GM12878 (cell line): ENCODE measurements at regions of chr17 and their contacts with region 1.

Region 1: DNA sequence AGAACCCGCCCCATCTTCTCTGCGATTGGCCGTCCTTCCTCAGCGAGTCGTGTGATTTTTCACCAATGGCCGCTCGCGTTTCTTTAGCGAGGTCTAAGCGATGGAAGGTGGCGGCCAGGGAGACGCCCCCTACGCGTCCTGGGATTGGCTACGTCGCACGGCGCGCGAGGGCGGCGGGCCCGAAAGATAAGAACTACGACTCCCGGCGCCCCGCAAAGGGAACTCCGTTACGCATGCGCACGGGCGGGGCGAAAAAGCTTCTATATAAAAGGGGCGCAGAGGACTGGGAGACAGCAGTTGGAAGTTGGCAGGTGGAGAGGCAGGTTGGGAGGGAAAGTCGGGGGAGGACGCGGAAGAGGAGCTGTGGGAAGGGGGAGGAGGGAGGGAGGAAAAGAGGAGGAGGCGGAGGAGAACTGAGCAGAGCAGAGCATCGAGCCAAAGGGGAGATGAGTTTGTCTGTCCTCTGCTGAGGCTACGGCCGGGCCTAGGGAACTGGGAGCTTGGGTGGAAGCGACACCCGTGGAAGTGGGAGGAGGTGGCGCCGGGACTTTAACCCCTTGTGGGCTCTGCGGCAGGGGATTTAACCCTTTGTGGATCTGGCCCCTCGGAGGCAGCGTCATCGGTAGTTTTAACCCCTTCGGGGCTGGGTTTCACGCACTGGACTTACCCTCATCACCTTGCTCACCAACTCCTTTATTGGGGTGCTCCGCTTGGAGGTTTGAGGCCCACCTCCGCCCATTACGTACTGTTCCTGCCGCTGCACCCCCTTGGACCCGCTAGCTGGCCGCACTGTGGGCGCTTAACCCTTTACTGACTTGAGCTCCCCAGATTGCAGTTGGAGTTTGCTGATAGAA is at the start of gene HEXIM1:
- DNase-seq: peak; percentile 95
- ATAC-seq: peak; percentile 83
- H3K4me3 ChIP-seq: peak within 1 kb of the TSS; percentile 96
- H3K27ac ChIP-seq: peak within 1 kb of the TSS; percentile 100
- H3K4me1 ChIP-seq: peaks cover 23% of the 10 kb centered on the region
- H3K27me3 ChIP-seq: no peaks in the 10 kb centered on the region
- CTCF ChIP-seq: no peak
- EP300 ChIP-seq: peak; percentile 13 to 14; a peak in 1 of 4 replicates
- POLR2A ChIP-seq: peak; percentile 100
- RAD21 ChIP-seq: no peak
- polyA plus RNA-seq, gene HEXIM1: 1.9 to 2.1 TPM

Region 2: DNA sequence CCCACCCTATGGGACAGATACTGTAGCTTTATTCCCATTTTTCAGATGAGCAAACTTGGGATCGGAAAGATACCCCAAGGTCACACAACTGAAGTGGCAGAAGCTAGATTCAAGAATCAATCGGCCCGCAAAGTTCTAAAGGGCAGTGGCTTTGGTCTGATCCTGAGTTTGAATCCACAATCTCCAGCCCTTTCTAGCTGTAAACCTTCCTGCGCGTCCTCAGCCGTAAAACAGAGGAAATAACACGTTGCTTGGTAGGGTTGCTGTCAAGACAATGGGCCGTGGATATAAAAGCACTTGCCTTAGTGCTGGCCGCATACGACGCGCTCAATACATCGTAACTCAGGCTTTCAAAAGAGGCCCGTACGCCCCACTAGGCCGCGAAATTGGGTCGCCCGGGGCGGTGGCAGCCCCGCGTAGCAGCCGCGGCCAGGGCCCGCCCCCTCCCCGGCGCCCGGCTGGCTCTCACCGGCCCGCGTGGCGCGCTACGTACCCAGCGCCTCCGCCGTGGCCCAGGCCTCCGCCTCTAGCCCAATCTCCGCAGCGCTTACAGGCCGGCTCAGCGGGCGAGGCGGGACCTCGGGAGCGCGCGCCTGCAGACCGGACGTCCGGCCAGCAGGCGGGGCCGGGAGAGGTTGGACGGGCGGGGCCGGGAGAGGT is 97.2 kb before region 1 on chr17 and contains the start of gene DCAKD:
- CTCF ChIA-PET with region 1: interaction called, 5 read pairs
- POLR2A ChIA-PET with region 1: interaction called, 20 read pairs
- RAD21 ChIA-PET with region 1: interaction called, 4 read pairs
- SMC1A ChIA-PET with region 1: interaction called, 3 read pairs
- in situ Hi-C with region 1: no loop called
- intact Hi-C with region 1: no loop called
- DNase-seq: no peak
- ATAC-seq: peak; percentile 97
- H3K4me3 ChIP-seq: peak within 1 kb of the TSS; percentile 76
- H3K27ac ChIP-seq: peak within 1 kb of the TSS; percentile 95
- H3K4me1 ChIP-seq: peaks cover 13% of the 10 kb centered on the region
- H3K27me3 ChIP-seq: no peaks in the 10 kb centered on the region
- CTCF ChIP-seq: no peak
- EP300 ChIP-seq: no peak
- POLR2A ChIP-seq: peak; percentile 77; the same call in 1 of the 2 replicates
- RAD21 ChIP-seq: no peak
- polyA plus RNA-seq, gene DCAKD: 11.6 to 11.7 TPM

Region 3: DNA sequence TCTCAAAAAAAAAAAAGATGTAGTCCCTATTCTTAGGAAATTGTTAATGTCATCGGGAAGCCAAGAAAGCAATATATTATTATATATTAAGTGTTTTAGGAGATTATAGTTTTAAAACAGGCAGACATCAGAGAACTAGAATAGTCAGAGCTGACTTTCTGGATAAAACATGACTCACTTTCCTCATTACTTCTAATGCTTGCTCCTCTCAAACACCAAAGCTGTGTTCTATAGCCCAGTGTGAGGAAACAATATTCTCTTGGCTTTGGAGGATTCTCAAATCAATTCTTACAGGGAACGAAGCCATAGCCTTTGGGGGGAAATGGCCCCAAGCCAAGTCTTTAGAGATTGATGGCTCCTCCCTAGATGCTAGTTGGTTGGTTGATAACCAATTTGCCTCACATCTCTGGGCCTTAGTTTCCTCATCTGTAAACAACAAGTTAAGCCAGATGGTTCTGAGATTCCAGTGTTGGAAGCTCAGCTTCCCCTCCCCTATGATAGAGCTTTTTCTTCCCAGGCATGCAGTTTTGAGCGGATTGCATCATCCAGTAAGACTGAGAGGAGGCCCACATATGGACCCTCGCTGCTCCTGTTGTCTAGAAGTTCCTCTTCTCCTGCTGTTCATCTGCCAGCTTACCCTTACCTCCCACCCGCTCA is 74.9 kb before region 1 on chr17:
- CTCF ChIA-PET with region 1: no interaction called
- POLR2A ChIA-PET with region 1: no interaction called
- RAD21 ChIA-PET with region 1: no interaction called
- SMC1A ChIA-PET with region 1: no interaction called
- in situ Hi-C with region 1: no loop called
- intact Hi-C with region 1: no loop called
- DNase-seq: no peak
- ATAC-seq: no peak
- H3K4me3 ChIP-seq: no peak overlapping the region
- H3K27ac ChIP-seq: no peak overlapping the region
- H3K4me1 ChIP-seq: peaks cover 19% of the 10 kb centered on the region
- H3K27me3 ChIP-seq: no peaks in the 10 kb centered on the region
- CTCF ChIP-seq: no peak
- EP300 ChIP-seq: no peak
- POLR2A ChIP-seq: no peak
- RAD21 ChIP-seq: no peak

Region 4: DNA sequence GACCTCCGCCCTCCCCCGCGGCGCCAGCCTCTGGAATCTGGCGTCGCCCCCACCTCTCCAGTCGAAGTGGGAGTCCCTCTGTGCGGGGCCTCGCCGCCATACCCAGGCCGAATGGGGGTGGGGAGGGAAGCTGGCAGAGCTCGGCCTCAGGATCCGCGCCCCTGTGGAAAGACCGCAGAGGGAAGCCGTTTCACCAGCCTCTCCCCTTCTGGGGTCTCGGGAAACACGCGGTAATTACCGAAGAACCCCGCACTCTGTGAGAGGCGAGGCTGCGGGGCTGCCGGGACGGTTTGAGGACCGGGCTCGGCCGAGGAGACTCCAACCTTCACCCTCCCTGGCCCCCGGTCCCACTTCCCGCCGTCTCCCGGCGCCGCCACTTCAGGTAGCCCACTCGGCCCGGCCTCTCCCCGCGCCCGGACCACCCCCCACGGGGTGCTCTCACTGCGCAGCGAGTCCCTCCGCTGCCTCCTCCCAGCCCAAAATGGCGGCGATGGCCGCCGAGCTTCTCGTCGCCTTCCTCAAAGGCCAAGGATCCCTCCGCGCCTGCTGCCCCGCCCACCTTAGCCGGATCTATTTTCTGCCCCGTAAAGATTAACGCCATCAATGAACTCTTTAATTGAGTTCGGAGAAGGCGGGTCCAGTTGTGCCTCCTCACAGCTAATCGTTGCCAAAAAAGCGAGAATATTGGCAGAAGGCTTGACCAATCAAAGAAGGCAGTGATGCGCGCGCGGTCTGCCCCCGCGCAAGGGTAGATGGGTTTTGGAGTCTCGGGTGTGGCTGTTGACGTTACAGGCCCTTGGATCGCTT is 12.8 kb after region 1 on chr17:
- CTCF ChIA-PET with region 1: interaction called, 199 read pairs
- POLR2A ChIA-PET with region 1: interaction called, 239 read pairs
- RAD21 ChIA-PET with region 1: interaction called, 100 read pairs
- SMC1A ChIA-PET with region 1: interaction called, 114 read pairs
- in situ Hi-C with region 1: no loop called
- intact Hi-C with region 1: loop called (anchors 1 kb)
- DNase-seq: peak; percentile 100
- ATAC-seq: peak; percentile 96
- H3K4me3 ChIP-seq: peak overlapping the region; percentile 86
- H3K27ac ChIP-seq: peak overlapping the region; percentile 98
- H3K4me1 ChIP-seq: peaks cover 8% of the 10 kb centered on the region
- H3K27me3 ChIP-seq: no peaks in the 10 kb centered on the region
- CTCF ChIP-seq: no peak
- EP300 ChIP-seq: peak in 1 of 2 experiments; percentile 69; a peak in 2 of 4 replicates
- POLR2A ChIP-seq: peak; percentile 95
- RAD21 ChIP-seq: no peak

Region 5: GRCh38 chr17:45172454-45173286 is 24.3 kb after region 1 on chr17:
- CTCF ChIA-PET with region 1: interaction called, 19 read pairs
- POLR2A ChIA-PET with region 1: interaction called, 5 read pairs
- RAD21 ChIA-PET with region 1: no interaction called
- SMC1A ChIA-PET with region 1: interaction called, 9 read pairs
- in situ Hi-C with region 1: no loop called
- intact Hi-C with region 1: no loop called
- DNase-seq: no peak
- ATAC-seq: peak; percentile 93
- H3K4me3 ChIP-seq: peak overlapping the region; percentile 23
- H3K27ac ChIP-seq: peak overlapping the region; percentile 64
- H3K4me1 ChIP-seq: peaks cover 7% of the 10 kb centered on the region; the same call in 1 of the 2 replicates
- H3K27me3 ChIP-seq: no peaks in the 10 kb centered on the region
- CTCF ChIP-seq: no peak
- EP300 ChIP-seq: no peak
- POLR2A ChIP-seq: 0 out of 2 replicates have a peak, but pooled peaks have one; percentile 26
- RAD21 ChIP-seq: no peak

Region 6: DNA sequence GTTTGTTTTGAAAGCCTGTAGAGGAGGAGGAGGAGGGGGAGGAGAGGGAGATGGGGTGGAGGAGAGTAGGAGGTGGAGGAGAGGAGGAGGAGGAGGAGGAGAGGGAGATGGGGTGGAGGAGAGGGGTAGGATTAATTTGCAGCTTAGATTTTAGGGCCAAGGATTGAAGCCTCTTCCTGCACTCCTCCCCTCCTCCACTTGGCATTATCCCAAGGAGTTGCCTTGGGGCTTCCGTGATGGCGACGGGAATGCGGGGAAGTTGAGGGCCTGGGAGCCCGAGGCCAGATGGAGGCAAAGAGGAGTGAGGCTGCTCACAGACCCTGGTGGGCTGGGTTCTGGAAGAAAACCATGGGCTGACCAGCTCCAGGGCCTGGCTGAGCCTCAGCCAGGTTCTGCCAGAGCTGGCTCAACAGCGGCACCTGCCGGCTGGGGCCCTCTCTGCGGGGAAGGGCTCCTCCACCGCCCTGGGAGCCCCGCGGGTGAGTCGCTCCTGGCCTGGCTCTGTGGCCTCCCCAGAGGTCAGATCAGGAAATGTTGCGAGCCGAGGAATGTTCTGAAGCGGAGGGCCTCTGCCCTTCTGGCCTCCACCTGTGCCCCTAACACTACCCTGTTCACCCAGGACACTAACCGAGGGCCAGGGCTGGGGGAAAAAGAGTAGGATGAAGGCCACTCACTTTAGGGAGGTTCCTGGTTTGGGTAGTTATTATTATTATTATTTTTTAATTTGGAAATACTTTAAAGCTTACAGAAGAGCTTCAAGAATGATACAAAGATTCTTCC is 49.3 kb after region 1 on chr17:
- CTCF ChIA-PET with region 1: interaction called, 189 read pairs
- POLR2A ChIA-PET with region 1: interaction called, 24 read pairs
- RAD21 ChIA-PET with region 1: interaction called, 76 read pairs
- SMC1A ChIA-PET with region 1: interaction called, 44 read pairs
- in situ Hi-C with region 1: no loop called
- intact Hi-C with region 1: loop called (anchors 1 kb)
- DNase-seq: peak; percentile 54
- ATAC-seq: peak; percentile 100
- H3K4me3 ChIP-seq: no peak overlapping the region
- H3K27ac ChIP-seq: no peak overlapping the region
- H3K4me1 ChIP-seq: peaks cover 8% of the 10 kb centered on the region
- H3K27me3 ChIP-seq: no peaks in the 10 kb centered on the region
- CTCF ChIP-seq: peak; percentile 99 to 100 (median 99)
- EP300 ChIP-seq: no peak
- POLR2A ChIP-seq: no peak
- RAD21 ChIP-seq: peak; percentile 97

Region 7: DNA sequence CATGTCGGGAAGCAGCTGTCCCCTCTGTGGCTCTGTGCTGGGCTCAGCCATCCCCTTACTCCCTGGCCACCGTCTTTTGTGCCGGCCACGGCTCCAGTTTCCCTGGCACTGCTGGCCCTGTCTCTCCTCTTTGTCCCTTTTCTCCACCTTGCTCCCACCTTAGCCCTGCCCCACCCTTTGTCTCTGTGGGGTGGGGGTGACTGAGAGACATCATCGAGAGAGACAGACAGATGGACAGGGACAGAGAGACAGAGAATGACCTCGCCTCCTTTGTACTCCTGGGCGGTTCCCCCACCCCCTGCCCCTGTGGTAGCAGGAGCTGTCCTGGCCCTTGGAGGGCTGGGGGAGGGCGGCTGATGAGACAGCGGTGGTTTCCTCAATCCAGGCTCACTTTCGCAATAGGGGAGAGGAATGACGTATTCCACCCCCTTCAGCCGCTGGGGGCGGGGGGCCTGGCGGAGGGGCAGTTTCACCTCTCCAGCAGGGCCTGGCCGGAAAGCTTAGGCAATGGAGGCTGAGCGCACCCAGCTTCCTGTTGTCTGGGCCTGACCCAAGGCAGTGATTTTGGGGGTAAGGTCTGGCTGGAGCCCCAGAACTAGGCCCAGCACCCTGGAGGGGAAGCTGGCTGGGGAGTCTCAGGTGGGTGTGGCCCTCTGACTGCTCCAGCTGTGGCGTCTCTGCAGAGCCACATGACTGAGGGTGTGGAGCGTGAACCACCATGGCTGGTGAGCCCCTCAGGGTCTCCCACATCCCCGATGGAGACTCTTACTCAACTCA is 80.5 kb after region 1 on chr17:
- CTCF ChIA-PET with region 1: interaction called, 8 read pairs
- POLR2A ChIA-PET with region 1: interaction called, 39 read pairs
- RAD21 ChIA-PET with region 1: interaction called, 12 read pairs
- SMC1A ChIA-PET with region 1: interaction called, 13 read pairs
- in situ Hi-C with region 1: no loop called
- intact Hi-C with region 1: no loop called
- DNase-seq: peak; percentile 68
- ATAC-seq: peak; percentile 56
- H3K4me3 ChIP-seq: peak overlapping the region; percentile 89
- H3K27ac ChIP-seq: peak overlapping the region; percentile 100
- H3K4me1 ChIP-seq: peaks cover 66% of the 10 kb centered on the region
- H3K27me3 ChIP-seq: no peaks in the 10 kb centered on the region
- CTCF ChIP-seq: no peak
- EP300 ChIP-seq: peak; percentile 84 to 91; a peak in 2 of 4 replicates
- POLR2A ChIP-seq: peak; percentile 75
- RAD21 ChIP-seq: no peak

Region 8: GRCh38 chr17:45235416-45236281 is 87.2 kb after region 1 on chr17:
- CTCF ChIA-PET with region 1: interaction called, 17 read pairs
- POLR2A ChIA-PET with region 1: interaction called, 8 read pairs
- RAD21 ChIA-PET with region 1: interaction called, 3 read pairs
- SMC1A ChIA-PET with region 1: interaction called, 5 read pairs
- in situ Hi-C with region 1: no loop called
- intact Hi-C with region 1: no loop called
- DNase-seq: no peak
- ATAC-seq: peak; percentile 85
- H3K4me3 ChIP-seq: no peak overlapping the region
- H3K27ac ChIP-seq: no peak overlapping the region
- H3K4me1 ChIP-seq: peaks cover 2% of the 10 kb centered on the region
- H3K27me3 ChIP-seq: no peaks in the 10 kb centered on the region
- CTCF ChIP-seq: peak; percentile 78 to 84 (median 82)
- EP300 ChIP-seq: no peak
- POLR2A ChIP-seq: no peak
- RAD21 ChIP-seq: peak; percentile 69